ENCODE measurements at regions of chr22 and their contacts with region 1.

Region 1: GRCh38 chr22:41237707-41238569 is 2.8 kb downstream of the CHADL start:
- DNase-seq: peak; percentile 82 to 91 (median 89)
- H3K4me3 ChIP-seq: peak overlapping the region; percentile 30 to 77 (median 59)
- H3K27ac ChIP-seq: no peak overlapping the region
- H3K4me1 ChIP-seq: peaks cover 0 to 24% (median 17%) of the 10 kb centered on the region in 4 experiments
- H3K27me3 ChIP-seq: no peaks in the 10 kb centered on the region

Region 2: GRCh38 chr22:41181349-41182241 is 56.3 kb before region 1 on chr22:
- CTCF ChIA-PET with region 1: interaction called, 10 read pairs
- POLR2A ChIA-PET with region 1: no interaction called
- DNase-seq: peak; percentile 25 to 61 (median 40)
- H3K4me3 ChIP-seq: no peak overlapping the region
- H3K27ac ChIP-seq: no peak overlapping the region
- H3K4me1 ChIP-seq: peaks cover 0 to 7% (median 6%) of the 10 kb centered on the region in 4 experiments
- H3K27me3 ChIP-seq: no peaks in the 10 kb centered on the region

Region 3: GRCh38 chr22:41197038-41197972 is 40.6 kb before region 1 on chr22:
- CTCF ChIA-PET with region 1: interaction called, 23 read pairs
- POLR2A ChIA-PET with region 1: no interaction called
- DNase-seq: peak; percentile 70 to 82 (median 73)
- H3K4me3 ChIP-seq: peak overlapping the region; percentile 61 to 91 (median 80)
- H3K27ac ChIP-seq: peak overlapping the region in 1 of 2 experiments; percentile 25
- H3K4me1 ChIP-seq: peaks cover 10 to 29% (median 22%) of the 10 kb centered on the region in 4 experiments
- H3K27me3 ChIP-seq: no peaks in the 10 kb centered on the region

Region 4: DNA sequence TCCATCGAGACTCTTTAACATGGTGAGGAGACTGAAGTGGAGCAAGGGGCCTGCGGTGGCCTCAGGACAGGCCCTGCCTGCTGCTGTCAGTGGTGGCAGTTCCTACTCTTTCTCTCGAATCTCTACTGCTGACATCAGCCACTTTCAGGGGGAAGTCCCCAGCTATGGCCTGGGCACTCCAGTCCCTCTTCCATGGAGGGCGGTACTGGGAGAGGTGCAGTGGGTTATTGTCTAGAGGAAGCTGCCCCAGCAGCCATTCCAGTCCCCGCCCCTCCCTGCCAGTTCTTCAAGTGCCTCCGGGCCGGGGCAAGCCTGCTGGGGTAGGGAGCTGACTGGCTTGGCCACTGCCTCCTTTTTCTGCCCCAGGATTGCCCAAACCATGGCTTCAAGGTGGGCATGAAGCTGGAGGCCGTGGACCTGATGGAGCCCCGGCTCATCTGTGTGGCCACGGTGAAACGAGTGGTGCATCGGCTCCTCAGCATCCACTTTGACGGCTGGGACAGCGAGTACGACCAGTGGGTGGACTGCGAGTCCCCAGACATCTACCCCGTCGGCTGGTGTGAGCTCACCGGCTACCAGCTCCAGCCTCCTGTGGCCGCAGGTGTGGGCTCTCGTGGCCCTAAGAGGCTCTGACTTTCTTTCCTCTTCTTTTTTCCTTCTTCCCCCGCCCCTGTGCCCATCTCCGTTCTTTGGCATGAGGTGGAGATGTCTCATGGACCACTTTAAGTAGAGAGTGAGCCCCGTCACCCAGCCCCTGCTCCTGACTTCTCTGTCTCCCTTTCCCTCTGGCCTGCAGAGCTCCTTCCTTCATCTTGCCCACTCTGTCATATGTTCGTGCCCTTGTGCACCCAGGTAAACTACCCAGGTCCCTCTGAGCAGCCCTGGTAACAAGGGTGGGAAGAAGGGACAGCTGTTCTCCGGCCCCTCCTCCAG is 10.9 kb before region 1 on chr22:
- CTCF ChIA-PET with region 1: interaction called, 12 read pairs
- POLR2A ChIA-PET with region 1: no interaction called
- DNase-seq: no peak
- H3K4me3 ChIP-seq: no peak overlapping the region
- H3K27ac ChIP-seq: peak overlapping the region in 1 of 2 experiments; percentile 25
- H3K4me1 ChIP-seq: peaks cover 0 to 24% (median 9%) of the 10 kb centered on the region in 4 experiments
- H3K27me3 ChIP-seq: no peaks in the 10 kb centered on the region

Measured in common myeloid progenitor, CD34-positive (primary cell).